ENCODE measurements at regions of chr10 and their contacts with region 1.

Region 1: DNA sequence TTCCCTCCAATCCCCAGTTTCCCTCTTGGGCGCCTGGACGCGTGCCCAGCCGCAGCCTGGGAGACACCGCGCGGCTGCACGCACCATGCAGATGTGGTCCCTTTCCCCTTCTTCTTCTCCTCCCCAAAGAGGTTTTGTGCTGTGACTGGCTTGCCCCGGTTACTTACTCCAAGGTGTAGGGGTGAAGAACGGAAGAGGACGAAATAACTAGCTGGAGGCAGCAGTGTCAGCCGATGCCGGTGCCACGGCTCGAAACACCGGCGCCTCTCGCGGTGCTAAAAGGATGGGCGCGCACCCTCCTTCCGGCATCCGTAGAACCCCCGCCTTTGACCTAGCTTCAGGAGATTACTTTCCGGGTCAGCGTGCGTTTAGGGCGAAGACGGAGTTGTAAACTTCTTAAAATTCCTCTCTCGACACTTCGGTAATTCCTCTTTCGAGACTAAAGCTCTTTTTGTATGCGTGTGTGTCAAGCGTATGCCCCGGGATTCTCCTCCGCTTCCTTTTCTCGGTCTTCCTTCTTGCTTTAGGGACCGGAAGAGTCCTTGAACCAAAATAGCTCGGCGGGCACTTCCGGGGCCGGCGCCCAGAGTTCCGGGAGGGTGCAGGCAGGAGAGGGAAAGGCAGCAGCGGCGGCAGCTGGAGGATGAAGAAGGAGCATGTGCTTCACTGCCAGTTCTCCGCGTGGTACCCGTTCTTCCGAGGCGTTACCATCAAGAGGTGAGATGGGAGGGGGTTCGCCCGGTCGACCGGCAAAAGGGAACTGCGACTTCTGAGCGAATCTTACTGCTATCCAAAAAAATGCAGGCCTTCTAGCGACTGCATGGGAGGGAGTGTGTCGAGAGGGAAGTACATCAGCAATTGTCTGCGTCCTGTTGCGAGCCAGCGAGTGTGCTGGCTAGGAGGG is at the starts of genes CDC123 and NUDT5:
- DNase-seq: peak; percentile 62 to 92 (median 84)
- ATAC-seq: peak; percentile 92
- H3K4me3 ChIP-seq: peak within 1 kb of the TSS; percentile 77 to 82
- H3K4me3 Mint-ChIP-seq: peak within 1 kb of the TSS; percentile 98
- H3K27ac ChIP-seq: peak within 1 kb of the TSS; percentile 82 to 98
- H3K27ac Mint-ChIP-seq: peak within 1 kb of the TSS; percentile 99
- H3K4me1 ChIP-seq: peaks cover 24% of the 10 kb centered on the region
- H3K4me1 Mint-ChIP-seq: peaks cover 62% of the 10 kb centered on the region
- H3K27me3 ChIP-seq: no peaks in the 10 kb centered on the region
- H3K27me3 Mint-ChIP-seq: no peaks in the 10 kb centered on the region
- CTCF ChIP-seq: no peak
- total RNA-seq, gene CDC123: 45.3 to 55.0 TPM
- total RNA-seq, gene NUDT5: 12.1 to 13.6 TPM

Region 2: DNA sequence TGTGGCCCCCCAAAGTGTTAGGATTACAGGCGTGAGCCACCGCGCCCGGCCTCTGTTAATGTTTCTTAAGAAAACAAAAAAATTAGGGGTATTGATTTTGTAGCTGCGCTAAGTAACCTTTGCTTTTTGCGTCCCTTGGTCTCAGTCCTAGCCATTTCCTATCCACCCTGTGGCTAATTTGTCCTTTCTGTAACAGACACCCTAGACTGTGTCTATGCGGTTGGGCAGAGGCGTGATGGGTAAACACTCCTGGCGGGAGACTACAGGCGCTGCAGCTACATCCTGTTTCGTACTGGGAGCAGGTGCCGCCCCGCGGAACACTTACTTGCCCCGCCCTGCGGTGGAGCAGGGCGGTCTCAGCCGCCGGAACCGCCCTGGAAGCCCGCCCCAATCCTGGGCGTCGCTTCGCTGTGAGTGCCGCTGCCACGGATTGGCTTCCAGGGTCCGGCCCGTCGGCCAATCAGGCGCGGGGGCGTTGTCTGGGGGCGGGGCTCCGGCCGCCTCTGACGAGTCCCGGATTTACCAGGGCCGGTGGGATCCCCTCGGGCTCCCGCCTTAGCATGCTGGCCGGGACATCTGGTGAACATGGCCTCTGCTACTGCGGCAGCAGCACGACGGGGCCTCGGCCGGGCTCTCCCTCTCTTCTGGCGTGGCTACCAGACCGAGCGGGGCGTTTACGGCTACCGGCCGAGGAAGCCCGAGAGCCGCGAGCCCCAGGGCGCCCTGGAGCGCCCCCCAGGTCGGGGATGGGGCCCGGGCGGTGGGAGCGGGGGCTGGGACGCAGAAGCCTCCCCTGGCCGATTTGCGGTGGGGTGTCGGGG is 127.2 kb before region 1 on chr10 and contains the start of gene DHTKD1:
- CTCF ChIA-PET with region 1: no interaction called
- POLR2A ChIA-PET with region 1: no interaction called
- intact Hi-C with region 1: loop called (anchors 1 to 2 kb)
- DNase-seq: peak; percentile 97 to 99 (median 98)
- ATAC-seq: peak; percentile 98
- H3K4me3 ChIP-seq: peak within 1 kb of the TSS; percentile 82 to 89
- H3K4me3 Mint-ChIP-seq: peak within 1 kb of the TSS; percentile 88
- H3K27ac ChIP-seq: peak within 1 kb of the TSS; percentile 66 to 75
- H3K27ac Mint-ChIP-seq: peak within 1 kb of the TSS; percentile 96
- H3K4me1 ChIP-seq: peaks cover 7% of the 10 kb centered on the region
- H3K4me1 Mint-ChIP-seq: peaks cover 19% of the 10 kb centered on the region
- H3K27me3 ChIP-seq: no peaks in the 10 kb centered on the region
- H3K27me3 Mint-ChIP-seq: no peaks in the 10 kb centered on the region
- CTCF ChIP-seq: peak; percentile 31
- total RNA-seq, gene DHTKD1: 6.6 TPM

Region 3: DNA sequence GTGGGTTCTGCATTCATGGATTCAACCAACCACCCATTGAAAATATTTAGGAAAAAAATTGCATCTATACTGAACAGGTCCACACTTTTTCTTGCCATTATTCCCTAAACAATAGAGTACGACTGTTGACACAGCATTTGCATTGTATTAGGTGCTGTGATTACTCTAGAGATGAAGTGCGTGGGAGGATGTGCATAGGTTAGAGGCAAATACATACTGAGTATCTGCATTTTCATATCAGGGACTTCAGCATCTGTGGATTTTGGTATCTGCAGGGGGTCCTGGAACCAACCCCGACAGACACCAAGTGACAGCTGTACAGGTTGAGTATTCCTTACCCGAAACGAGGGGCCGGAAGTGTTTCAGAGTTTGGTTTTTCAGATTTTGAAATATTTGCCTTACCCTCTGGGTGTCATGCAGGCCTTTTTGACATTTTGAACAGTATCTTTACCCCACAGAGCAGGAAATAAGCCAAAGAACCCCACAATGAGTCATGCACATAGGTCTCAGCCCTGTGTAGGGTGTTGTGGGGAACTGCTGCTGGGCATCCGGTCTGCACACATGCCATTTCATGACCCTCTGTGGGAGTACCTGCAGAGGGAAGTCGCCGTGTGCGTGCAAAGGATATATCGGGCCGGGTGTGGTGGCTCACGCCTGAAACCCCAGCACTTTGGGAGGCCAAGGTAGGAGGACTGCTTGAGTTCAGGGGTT is 14.6 kb before region 1 on chr10:
- CTCF ChIA-PET with region 1: interaction called, 8 read pairs
- POLR2A ChIA-PET with region 1: interaction called, 7 read pairs
- intact Hi-C with region 1: loop called (anchors 1 kb)
- DNase-seq: peak; percentile 34 to 91 (median 71)
- ATAC-seq: peak; percentile 98
- H3K4me3 ChIP-seq: no peak overlapping the region
- H3K4me3 Mint-ChIP-seq: peak overlapping the region; percentile 60
- H3K27ac ChIP-seq: peak overlapping the region; percentile 46 to 53
- H3K27ac Mint-ChIP-seq: peak overlapping the region; percentile 95
- H3K4me1 ChIP-seq: peaks cover 13% of the 10 kb centered on the region
- H3K4me1 Mint-ChIP-seq: peaks cover 27% of the 10 kb centered on the region
- H3K27me3 ChIP-seq: no peaks in the 10 kb centered on the region
- H3K27me3 Mint-ChIP-seq: no peaks in the 10 kb centered on the region
- CTCF ChIP-seq: no peak

Region 4: GRCh38 chr10:12235796-12236195 is 39.9 kb after region 1 on chr10:
- CTCF ChIA-PET with region 1: no interaction called
- POLR2A ChIA-PET with region 1: no interaction called
- intact Hi-C with region 1: no loop called
- DNase-seq: no peak
- ATAC-seq: no peak
- H3K4me3 ChIP-seq: no peak overlapping the region
- H3K4me3 Mint-ChIP-seq: no peak overlapping the region
- H3K27ac ChIP-seq: no peak overlapping the region
- H3K27ac Mint-ChIP-seq: no peak overlapping the region
- H3K4me1 ChIP-seq: no peaks in the 10 kb centered on the region
- H3K4me1 Mint-ChIP-seq: no peaks in the 10 kb centered on the region
- H3K27me3 ChIP-seq: no peaks in the 10 kb centered on the region
- H3K27me3 Mint-ChIP-seq: no peaks in the 10 kb centered on the region
- CTCF ChIP-seq: no peak

Region 5: DNA sequence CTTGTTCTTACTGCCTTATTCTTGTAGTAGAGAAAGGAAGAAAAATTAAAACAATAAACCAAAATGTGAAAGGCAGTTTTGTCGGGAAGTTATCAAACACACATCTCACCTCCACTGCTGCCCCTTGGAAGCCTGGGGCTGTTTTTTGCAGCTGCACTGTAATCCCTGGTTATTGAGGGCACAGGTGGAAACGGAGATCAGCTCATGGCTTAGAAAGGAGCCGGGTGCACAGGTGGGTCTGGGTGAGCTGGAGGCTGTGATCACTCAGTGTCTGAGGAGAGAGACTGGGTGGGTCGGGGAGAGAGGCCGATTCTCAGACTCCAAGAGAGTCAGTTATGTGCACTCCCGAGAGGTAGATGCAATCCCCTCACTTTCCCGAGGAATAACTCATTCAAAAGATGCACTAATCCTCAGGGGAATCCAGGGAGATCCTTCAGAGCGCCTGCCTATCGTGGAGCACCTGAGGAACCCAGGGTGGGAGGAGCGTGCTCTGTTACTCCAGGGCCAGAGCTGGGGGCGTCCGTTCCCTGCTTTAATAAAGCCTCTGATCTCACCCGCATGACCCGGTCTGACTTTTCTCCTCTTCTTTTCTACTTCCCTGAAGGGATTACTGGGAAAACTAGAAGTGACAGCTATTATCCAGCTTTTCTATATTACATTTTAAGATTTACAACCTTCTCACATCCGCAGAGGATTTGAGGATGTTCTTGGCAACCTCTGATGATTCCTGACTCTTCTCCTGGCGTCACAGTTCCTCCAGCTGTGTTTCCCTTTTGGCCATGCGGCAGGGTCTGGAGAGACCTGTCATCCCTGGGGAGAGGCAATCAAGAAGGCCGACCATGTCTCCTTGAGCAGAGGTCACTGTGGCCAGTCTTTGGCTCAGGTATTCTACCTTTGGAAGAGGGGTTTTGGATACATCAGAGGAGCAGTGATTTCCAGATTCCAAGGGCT is 235.6 kb after region 1 on chr10:
- CTCF ChIA-PET with region 1: no interaction called
- POLR2A ChIA-PET with region 1: no interaction called
- intact Hi-C with region 1: no loop called
- DNase-seq: no peak
- ATAC-seq: no peak
- H3K4me3 ChIP-seq: no peak overlapping the region
- H3K4me3 Mint-ChIP-seq: no peak overlapping the region
- H3K27ac ChIP-seq: no peak overlapping the region
- H3K27ac Mint-ChIP-seq: peak overlapping the region; percentile 6
- H3K4me1 ChIP-seq: no peaks in the 10 kb centered on the region
- H3K4me1 Mint-ChIP-seq: peaks cover 16% of the 10 kb centered on the region
- H3K27me3 ChIP-seq: no peaks in the 10 kb centered on the region
- H3K27me3 Mint-ChIP-seq: no peaks in the 10 kb centered on the region
- CTCF ChIP-seq: no peak

Region 6: DNA sequence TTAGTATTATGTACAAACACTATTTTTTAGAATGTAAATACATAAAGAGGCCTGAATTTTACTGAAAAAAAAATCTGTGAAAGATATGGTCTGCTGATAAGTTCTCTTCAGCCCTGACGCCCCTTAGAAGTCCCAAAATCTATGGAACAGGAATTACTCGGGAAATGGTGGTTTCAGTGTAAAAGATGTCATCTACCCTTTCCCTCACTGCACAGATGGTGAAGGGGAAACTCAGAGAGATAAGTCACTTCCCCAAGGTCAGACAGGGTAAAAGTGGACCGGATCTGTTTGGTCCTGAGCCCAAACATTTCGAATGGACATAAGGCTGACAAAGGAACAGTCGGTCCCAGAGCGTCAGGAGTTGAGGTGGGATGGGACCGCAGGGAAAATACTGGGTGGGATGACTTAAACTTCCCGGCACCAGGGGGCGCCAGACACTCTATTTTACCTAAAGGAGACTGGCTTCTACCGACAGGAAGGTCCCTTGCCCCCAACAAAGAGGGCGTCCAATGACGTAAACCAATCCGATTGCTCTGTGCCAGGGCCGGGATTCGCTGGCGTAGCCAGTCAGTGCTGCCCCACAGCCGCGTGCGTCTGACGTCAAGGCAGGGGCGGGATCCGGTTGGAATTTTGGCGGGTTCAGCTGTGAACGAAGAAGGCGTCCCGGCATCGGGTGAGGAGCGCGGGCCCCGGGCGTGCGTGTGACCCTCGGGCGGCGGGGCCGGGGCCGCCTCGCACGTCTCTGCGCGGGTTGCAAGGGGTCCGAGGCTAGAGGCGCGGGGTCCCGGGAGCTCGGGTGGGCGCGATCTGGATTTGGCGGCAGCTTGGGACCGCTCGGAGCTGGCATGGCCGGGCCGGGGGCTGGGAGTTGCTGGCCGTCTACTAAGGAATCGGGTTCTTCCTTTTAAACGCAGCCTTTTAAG is 965.3 kb after region 1 on chr10 and contains the start of gene MCM10:
- CTCF ChIA-PET with region 1: no interaction called
- POLR2A ChIA-PET with region 1: no interaction called
- intact Hi-C with region 1: loop called in 1 of 2 experiments (anchors 5 kb)
- DNase-seq: peak; percentile 93 to 99 (median 98)
- ATAC-seq: peak; percentile 100
- H3K4me3 ChIP-seq: peak within 1 kb of the TSS; percentile 44 to 49
- H3K4me3 Mint-ChIP-seq: peak within 1 kb of the TSS; percentile 88
- H3K27ac ChIP-seq: peak within 1 kb of the TSS in 1 of 2 experiments; percentile 40
- H3K27ac Mint-ChIP-seq: peak within 1 kb of the TSS; percentile 86
- H3K4me1 ChIP-seq: peaks cover 10% of the 10 kb centered on the region
- H3K4me1 Mint-ChIP-seq: peaks cover 14% of the 10 kb centered on the region
- H3K27me3 ChIP-seq: no peaks in the 10 kb centered on the region
- H3K27me3 Mint-ChIP-seq: no peaks in the 10 kb centered on the region
- CTCF ChIP-seq: peak; percentile 96
- total RNA-seq, gene MCM10: 0.08 to 0.19 TPM

Region 7: DNA sequence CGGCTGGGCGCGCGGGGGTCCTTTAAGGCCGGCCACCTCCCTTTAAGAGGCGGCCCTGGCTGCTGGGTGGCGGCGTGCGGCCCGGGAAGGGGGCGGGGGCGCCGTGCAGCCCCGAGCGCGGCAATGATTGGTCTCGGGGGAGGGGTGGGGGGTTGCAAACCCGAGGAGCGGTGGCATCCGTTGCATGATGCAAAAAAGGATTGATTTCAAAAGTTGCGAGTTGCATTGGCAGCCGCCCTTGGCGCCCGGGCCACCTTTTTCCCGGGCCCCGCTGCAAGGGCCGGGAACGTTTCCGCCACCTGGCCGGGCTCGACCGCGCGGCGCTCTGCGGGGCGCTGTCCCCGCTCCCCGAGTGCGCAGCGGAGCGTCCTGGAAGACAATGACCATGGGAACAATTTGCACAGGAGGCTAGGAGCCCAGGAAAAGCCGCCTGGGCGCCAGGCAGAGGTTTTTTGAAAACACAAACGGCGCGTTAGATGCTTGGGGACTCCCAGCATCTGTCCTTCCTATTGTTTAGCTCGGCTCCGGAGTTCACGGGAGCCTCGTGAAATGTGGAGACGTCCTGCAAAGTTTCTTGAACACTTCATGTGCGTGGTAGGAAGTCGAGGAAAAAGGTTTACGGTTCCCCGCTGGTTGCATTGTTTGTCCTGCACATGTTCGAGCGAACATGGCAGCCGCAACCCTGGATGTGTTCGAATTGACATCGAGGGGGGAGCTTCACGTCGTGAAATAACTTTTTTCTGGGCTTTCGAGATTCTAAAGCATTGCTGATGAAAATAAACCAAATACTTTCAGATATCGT is 1152.6 kb after region 1 on chr10 and contains the start of gene SEPHS1:
- CTCF ChIA-PET with region 1: interaction called, 3 read pairs
- POLR2A ChIA-PET with region 1: no interaction called
- intact Hi-C with region 1: loop called in 1 of 2 experiments (anchors 10 kb)
- DNase-seq: peak; percentile 51 to 89 (median 79)
- ATAC-seq: peak; percentile 67
- H3K4me3 ChIP-seq: peak within 1 kb of the TSS; percentile 83 to 93
- H3K4me3 Mint-ChIP-seq: peak within 1 kb of the TSS; percentile 96
- H3K27ac ChIP-seq: peak within 1 kb of the TSS; percentile 65 to 82
- H3K27ac Mint-ChIP-seq: peak within 1 kb of the TSS; percentile 94
- H3K4me1 ChIP-seq: peaks cover 48% of the 10 kb centered on the region
- H3K4me1 Mint-ChIP-seq: peaks cover 61% of the 10 kb centered on the region
- H3K27me3 ChIP-seq: no peaks in the 10 kb centered on the region
- H3K27me3 Mint-ChIP-seq: no peaks in the 10 kb centered on the region
- CTCF ChIP-seq: no peak
- total RNA-seq, gene SEPHS1: 16.9 to 19.2 TPM